AG04450 (cell line): ENCODE measurements at regions of chr17 and their contacts with region 1.

Region 1: GRCh38 chr17:59155439-59156182 is at the start of gene PRR11:
- DNase-seq: peak; percentile 100
- H3K4me3 ChIP-seq: peak within 1 kb of the TSS; percentile 92
- H3K27ac ChIP-seq: peak within 1 kb of the TSS; percentile 97
- H3K27me3 ChIP-seq: no peaks in the 10 kb centered on the region
- CTCF ChIP-seq: no peak
- polyA plus RNA-seq, gene PRR11: 15.0 and 20.2 TPM in 2 replicates

Region 2: GRCh38 chr17:59106463-59107305 is 48.9 kb before region 1 on chr17 and contains the start of gene TRIM37:
- CTCF ChIA-PET with region 1: interaction called, 4 read pairs
- POLR2A ChIA-PET with region 1: interaction called, 12 read pairs
- DNase-seq: peak; percentile 98
- H3K4me3 ChIP-seq: peak within 1 kb of the TSS; percentile 86
- H3K27ac ChIP-seq: peak within 1 kb of the TSS; percentile 96
- H3K27me3 ChIP-seq: no peaks in the 10 kb centered on the region
- CTCF ChIP-seq: no peak; the same call in 1 of the 2 replicates
- polyA plus RNA-seq, gene TRIM37: 29.1 and 34.8 TPM in 2 replicates

Region 3: DNA sequence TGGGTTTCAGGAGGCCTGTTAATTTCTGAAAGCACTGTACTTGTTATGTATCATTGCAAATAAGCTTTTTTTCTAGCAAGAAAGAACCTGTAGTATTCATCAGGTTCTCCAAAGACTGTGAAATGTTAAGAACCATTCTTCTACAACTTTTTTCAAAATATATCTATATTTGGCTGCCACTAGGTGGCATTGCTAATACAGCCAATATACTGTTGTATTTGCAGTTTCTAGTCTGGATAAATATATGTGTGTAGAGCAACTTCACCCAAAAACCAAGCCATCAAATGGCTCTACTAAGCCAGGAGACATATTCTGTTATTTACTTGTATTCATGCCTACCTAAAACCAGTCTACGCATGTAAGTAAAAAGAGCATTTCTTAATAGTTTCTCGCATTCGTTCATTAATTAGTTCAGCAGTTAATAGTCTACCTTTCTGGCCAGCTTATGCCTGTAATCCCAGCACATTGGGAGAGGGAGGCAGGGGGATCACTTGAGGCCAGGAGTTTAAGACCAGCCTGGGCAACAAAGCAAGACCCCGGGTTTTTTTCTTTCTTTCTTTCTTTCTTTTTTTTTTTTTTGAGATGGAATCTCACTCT is 591.3 kb after region 1 on chr17:
- CTCF ChIA-PET with region 1: no interaction called
- POLR2A ChIA-PET with region 1: interaction called, 10 read pairs
- DNase-seq: no peak
- H3K4me3 ChIP-seq: no peak overlapping the region
- H3K27ac ChIP-seq: no peak overlapping the region
- H3K27me3 ChIP-seq: no peaks in the 10 kb centered on the region
- CTCF ChIP-seq: peak; percentile 73